RWPE1 (cell line): ENCODE measurements at regions of chr10 and their contacts with region 1.

Region 1: DNA sequence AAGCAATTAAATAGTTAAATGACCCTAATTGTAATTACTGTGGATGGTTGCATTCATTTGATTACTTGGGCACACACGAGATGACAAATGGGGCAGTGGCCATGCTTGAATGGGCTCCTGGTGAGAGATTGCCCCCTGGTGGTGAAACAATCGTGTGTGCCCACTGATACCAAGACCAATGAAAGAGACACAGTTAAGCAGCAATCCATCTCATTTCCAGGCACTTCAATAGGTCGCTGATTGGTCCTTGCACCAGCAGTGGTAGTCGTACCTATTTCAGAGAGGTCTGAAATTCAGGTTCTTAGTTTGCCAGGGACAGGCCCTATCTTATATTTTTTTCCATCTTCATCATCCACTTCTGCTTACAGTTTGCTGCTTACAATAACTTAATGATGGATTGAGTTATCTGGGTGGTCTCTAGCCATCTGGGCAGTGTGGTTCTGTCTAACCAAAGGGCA is 8.3 kb downstream of the PCBD1 start:
- DNase-seq: peak; percentile 78
- H3K27ac ChIP-seq: no peak overlapping the region
- CTCF ChIP-seq: peak; percentile 88

Region 2: GRCh38 chr10:70786799-70787415 is 93.2 kb before region 1 on chr10:
- CTCF ChIA-PET with region 1: interaction called, 10 read pairs
- POLR2A ChIA-PET with region 1: no interaction called
- DNase-seq: no peak
- H3K27ac ChIP-seq: no peak overlapping the region
- CTCF ChIP-seq: no peak